Left ventricle myocardium superior (tissue), 1 donor: ENCODE measurements at regions of chr10 and their contacts with region 1.

Region 1: GRCh38 chr10:102009801-102010425 is 46.1 kb downstream of the ARMH3 start:
- DNase-seq: no peak
- ATAC-seq: peak; percentile 95

Region 2: DNA sequence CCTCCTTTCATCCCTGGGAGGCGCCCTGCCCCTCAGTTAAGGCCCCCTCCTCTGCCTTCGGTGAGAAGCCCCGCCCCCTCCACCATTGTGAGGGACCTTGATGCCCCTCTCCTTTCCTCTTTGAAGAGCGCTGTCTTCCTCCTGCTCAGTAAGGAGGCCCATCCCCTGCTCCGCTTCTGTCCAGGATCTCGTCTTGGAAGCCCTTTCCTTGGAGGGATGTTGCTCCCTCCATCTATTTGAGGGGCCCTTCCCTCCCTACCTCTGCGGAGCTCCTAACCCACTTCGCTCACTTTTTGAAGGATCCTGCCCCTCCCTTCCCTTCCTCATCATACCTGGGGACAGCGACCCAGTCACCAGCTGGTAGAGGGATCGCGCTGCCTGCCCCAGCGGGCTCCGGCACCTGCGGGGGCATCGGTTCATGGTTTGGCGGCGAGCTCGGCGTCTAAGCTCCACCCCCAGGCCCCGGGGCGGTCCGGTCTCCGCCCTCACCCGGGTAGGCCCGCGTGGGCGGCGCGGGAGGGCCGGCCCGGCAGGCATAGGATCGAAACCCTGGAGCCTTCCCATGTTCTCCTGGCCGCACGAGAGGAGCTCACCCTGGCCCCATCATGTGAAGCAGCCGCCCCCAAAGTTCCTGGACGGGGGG is 170.4 kb before region 1 on chr10:
- intact Hi-C with region 1: loop called (anchors 5 kb)
- DNase-seq: peak; percentile 72
- ATAC-seq: peak; percentile 25

Region 3: GRCh38 chr10:101889256-101890210 is 120.4 kb before region 1 on chr10:
- intact Hi-C with region 1: loop called (anchors 2 kb)
- DNase-seq: peak; percentile 83
- ATAC-seq: peak; percentile 14